ENCODE measurements at regions of chr3 and their contacts with region 1.

Region 1: GRCh38 chr3:157130467-157131251 is 29.3 kb downstream of the CCNL1 start:
- DNase-seq: peak; percentile 67 to 93 (median 76)
- H3K4me3 ChIP-seq: no peak overlapping the region
- H3K4me3 Mint-ChIP-seq: peak overlapping the region in 1 of 2 donors; percentile 21
- H3K27ac ChIP-seq: no peak overlapping the region
- H3K27ac Mint-ChIP-seq: peak overlapping the region in 5 of 7 donors; percentile 13 to 54 (median 31)
- H3K4me1 ChIP-seq: peaks cover 7 to 10% of the 10 kb centered on the region in 2 donors
- H3K4me1 Mint-ChIP-seq: peaks cover 30% of the 10 kb centered on the region
- H3K27me3 ChIP-seq: no peaks in the 10 kb centered on the region
- H3K27me3 Mint-ChIP-seq: peaks cover 0 to 1% (median 1%) of the 10 kb centered on the region in 3 donors
- CTCF ChIP-seq: peak; percentile 78

Region 2: DNA sequence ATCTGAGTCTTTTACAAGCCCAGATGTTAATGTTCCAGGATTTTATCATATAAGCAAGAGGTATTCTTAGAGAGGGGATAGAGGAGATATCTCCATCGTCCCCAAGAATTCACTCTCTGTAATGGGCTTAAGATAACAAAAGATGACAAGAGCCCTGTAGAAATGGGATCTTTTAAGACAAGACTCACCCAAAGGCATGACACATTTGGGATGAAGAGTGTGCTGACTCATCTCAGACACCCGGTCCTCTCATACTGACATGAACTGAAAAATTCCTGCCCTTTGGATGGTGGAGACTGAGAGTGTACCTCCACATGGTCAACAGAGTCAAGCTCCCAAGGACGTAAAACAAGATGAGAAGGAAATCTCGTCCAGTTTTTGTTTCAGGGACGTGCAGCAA is 293.5 kb before region 1 on chr3:
- intact Hi-C with region 1: loop called in 1 of 2 experiments (anchors 10 kb)
- DNase-seq: peak in 1 of 3 donors; percentile 18
- H3K4me3 ChIP-seq: no peak overlapping the region
- H3K4me3 Mint-ChIP-seq: no peak overlapping the region
- H3K27ac ChIP-seq: no peak overlapping the region
- H3K27ac Mint-ChIP-seq: no peak overlapping the region
- H3K4me1 ChIP-seq: no peaks in the 10 kb centered on the region
- H3K4me1 Mint-ChIP-seq: peaks cover 9% of the 10 kb centered on the region
- H3K27me3 ChIP-seq: no peaks in the 10 kb centered on the region
- H3K27me3 Mint-ChIP-seq: peaks cover 0 to 2% (median 1%) of the 10 kb centered on the region in 3 donors
- CTCF ChIP-seq: no peak

Region 3: DNA sequence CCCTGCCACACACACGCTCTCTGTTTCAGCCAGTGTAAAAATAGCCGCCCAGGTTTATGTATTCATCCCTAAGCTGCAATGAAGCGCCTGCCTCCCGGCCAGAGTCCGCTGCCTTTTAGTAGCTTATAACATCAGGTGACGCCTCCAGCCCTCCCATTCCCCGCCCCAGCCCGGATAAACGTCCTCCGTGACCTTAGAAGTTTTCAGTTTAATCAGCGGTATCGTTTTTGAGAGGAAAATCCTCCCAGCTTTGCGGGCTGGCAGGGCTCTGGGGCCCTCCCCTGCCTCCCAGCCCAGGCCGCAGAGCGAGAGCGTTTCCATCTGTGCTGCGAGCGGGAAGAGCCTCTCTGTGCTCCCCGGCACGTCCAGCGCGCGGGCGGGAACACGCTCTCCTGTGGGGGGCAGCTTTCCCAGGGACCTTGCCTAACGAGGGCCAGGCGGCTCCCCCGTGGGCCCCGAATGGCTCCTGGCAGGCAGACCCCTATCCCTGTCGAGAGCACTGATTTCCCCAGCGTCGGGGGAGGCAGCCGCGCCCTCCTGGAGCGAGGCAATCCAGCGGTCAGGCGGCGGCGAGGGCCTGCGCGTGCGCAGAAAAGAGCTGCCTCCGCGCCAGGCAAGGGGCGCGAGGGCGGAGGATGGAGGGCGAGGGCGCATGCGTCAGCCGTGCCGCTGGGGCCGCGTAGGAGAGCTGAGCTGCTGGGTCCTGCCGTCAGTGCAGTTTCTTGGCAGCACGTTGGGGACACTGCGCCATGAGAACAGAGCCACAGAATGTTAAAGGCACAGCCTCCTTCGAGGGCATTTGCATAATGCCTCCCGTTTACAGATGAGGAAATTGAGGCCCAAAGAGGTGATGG is 41.8 kb before region 1 on chr3:
- intact Hi-C with region 1: loop called in 1 of 2 experiments (anchors 5 kb)
- DNase-seq: peak; percentile 89 to 91 (median 89)
- H3K4me3 ChIP-seq: peak overlapping the region; percentile 48 to 80 (median 77)
- H3K4me3 Mint-ChIP-seq: peak overlapping the region; percentile 81 to 90
- H3K27ac ChIP-seq: peak overlapping the region; percentile 83 to 98
- H3K27ac Mint-ChIP-seq: peak overlapping the region; percentile 87 to 94 (median 91)
- H3K4me1 ChIP-seq: peaks cover 33 to 36% of the 10 kb centered on the region in 2 donors
- H3K4me1 Mint-ChIP-seq: peaks cover 34% of the 10 kb centered on the region
- H3K27me3 ChIP-seq: peaks cover 0 to 6% of the 10 kb centered on the region in 2 donors
- H3K27me3 Mint-ChIP-seq: peaks cover 6 to 10% (median 6%) of the 10 kb centered on the region in 3 donors
- CTCF ChIP-seq: no peak